Lower lobe of right lung (tissue), 2 donors: ENCODE measurements at regions of chr3 and their contacts with region 1.

Region 1: GRCh38 chr3:170397579-170398177 is 21.0 kb upstream of the CLDN11 start:
- DNase-seq: no peak
- ATAC-seq: peak in 1 of 2 donors; percentile 16
- H3K4me3 ChIP-seq: no peak overlapping the region
- H3K27ac ChIP-seq: no peak overlapping the region
- H3K4me1 ChIP-seq: no peaks in the 10 kb centered on the region
- H3K27me3 ChIP-seq: no peaks in the 10 kb centered on the region
- CTCF ChIP-seq: no peak

Region 2: DNA sequence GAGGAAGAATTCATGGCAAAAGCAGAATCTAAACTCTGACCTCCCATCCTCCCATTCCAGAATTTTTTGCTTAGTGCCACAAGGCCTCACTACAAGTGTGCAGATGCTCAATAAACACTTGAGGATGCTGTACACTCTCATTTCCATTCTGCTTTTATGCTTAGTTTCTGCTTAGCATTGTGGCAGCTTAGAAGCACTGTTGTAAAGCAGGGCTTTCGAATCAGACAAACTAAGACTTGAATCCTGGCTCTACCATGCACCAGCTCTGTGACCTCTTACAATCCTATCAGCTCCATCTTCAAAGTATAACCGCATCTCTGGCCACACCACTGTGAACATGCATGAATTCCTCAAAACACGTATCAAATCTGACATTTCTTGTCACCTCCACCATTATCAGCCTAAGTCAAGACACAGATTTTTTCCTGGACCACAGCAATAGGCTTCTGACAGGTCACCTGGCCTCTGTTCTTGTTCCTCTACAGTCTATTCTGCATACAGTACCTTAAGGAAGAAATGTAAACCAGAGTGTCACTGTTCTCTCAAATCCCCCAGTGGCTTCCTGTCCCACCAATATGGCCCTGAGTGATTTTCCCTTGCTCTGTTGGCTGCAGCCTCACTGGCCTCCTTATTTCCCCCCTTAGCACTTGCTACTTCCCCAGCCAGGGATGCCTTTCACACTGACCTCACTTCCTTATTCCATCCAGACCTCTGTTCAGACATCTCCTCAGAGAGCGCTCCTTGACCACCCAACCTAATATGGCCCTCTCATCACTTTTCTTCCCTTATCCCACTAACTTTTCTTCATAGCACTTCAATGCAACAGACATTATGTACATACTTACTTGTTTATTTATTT is 208.1 kb before region 1 on chr3:
- intact Hi-C with region 1: no loop called
- DNase-seq: no peak
- ATAC-seq: peak; percentile 61 to 71
- H3K4me3 ChIP-seq: no peak overlapping the region
- H3K27ac ChIP-seq: no peak overlapping the region
- H3K4me1 ChIP-seq: no peaks in the 10 kb centered on the region
- H3K27me3 ChIP-seq: no peaks in the 10 kb centered on the region
- CTCF ChIP-seq: no peak

Region 3: DNA sequence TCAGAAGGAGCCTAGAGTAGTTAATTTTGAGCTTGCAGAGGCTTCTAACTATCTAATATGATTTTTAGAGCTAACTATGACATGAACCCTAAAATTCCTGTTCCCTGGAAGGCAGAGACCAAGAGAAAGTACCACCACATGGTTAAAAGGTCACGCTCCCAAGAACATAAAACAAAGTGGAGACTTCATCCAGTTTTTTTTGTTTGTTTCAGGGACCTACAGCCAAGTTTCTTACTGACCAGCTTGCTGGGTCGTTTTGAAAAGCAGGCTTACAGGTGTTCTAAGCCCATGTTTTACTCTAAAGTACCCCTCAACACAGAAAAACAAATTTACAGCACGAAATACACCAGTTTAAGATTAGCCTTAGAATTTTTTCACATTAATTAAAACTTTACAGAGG is 79.7 kb before region 1 on chr3:
- intact Hi-C with region 1: loop called (anchors 10 kb)
- DNase-seq: no peak
- ATAC-seq: no peak
- H3K4me3 ChIP-seq: no peak overlapping the region
- H3K27ac ChIP-seq: no peak overlapping the region
- H3K4me1 ChIP-seq: no peaks in the 10 kb centered on the region
- H3K27me3 ChIP-seq: no peaks in the 10 kb centered on the region
- CTCF ChIP-seq: no peak